ENCODE measurements at regions of chr10 and their contacts with region 1.

Region 1: DNA sequence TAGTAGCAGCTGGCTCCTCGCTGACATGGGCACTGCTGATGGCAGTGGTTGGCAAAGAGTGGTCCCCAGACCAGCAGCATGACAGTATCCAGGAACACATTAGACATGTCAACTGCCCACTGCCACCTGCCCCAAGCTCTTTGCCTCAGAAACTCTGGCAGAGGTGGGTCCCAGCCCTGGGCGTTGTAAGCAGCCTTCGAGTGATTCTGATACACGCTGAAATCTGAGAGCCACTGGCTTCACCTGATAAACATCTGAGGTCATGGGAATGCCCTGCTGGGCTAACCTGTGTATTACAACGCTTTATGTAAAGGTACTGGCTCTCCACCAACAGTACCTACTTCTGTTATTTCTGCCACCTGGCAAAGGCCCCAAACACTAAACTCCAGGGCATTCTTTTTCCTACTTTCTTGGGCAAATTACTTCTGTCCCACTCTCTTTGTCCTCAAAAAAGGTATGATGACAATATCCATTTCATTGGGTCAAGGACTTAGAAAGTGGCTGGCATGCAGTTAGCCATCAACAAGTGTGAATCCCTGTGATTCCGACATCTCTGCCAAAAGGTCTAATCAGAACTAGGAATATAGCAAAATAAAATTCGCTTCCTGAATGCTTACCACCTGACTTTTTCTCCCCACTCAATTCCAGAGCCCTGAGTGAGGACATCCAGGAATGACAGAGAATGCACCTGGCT is 9.2 kb downstream of the SGMS1 start:
- DNase-seq: peak in 1 of 2 donors; percentile 51
- ATAC-seq: peak; percentile 83 to 93 (median 86)
- H3K4me3 ChIP-seq: no peak overlapping the region
- H3K27ac ChIP-seq: peak overlapping the region; percentile 62
- H3K4me1 ChIP-seq: peaks cover 45% of the 10 kb centered on the region
- H3K27me3 ChIP-seq: no peaks in the 10 kb centered on the region
- CTCF ChIP-seq: peak; percentile 61

Region 2: DNA sequence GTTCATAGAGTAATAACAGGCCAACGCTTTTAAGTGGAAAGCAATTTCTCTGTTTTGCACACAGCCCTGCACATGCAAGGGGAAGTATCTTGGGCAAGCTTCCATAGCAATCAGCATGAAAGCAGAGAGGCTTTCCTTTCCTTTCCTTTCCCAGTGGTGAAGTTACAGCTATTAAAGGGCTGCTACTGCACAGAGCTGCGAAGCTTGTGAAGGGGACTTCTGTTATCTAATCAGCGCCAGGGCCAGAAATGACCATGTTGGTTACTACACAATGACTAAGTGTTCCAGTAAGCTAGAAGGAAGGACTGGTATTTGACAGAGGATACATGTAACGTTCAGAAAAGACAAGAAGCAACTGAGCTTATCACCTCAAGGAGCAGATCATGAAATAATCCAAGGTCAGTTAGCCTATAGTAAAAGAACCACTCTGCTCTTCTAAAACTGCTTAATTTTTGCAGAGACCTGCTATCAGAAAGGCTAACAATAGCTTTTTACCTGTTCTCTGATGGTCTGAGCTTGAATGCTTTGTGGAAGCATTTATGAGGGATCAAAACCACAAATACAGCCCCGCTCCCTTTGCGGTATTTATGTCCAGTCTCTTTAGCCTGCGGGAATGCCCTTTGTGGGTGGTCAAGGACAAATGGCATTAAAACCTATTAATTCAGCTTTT is 36.8 kb before region 1 on chr10:
- intact Hi-C with region 1: loop called in 1 of 2 experiments (anchors 5 kb)
- DNase-seq: no peak
- ATAC-seq: peak; percentile 73 to 93 (median 84)
- H3K4me3 ChIP-seq: peak overlapping the region; percentile 5
- H3K27ac ChIP-seq: peak overlapping the region; percentile 26
- H3K4me1 ChIP-seq: peaks cover 57% of the 10 kb centered on the region
- H3K27me3 ChIP-seq: no peaks in the 10 kb centered on the region
- CTCF ChIP-seq: no peak

Region 3: DNA sequence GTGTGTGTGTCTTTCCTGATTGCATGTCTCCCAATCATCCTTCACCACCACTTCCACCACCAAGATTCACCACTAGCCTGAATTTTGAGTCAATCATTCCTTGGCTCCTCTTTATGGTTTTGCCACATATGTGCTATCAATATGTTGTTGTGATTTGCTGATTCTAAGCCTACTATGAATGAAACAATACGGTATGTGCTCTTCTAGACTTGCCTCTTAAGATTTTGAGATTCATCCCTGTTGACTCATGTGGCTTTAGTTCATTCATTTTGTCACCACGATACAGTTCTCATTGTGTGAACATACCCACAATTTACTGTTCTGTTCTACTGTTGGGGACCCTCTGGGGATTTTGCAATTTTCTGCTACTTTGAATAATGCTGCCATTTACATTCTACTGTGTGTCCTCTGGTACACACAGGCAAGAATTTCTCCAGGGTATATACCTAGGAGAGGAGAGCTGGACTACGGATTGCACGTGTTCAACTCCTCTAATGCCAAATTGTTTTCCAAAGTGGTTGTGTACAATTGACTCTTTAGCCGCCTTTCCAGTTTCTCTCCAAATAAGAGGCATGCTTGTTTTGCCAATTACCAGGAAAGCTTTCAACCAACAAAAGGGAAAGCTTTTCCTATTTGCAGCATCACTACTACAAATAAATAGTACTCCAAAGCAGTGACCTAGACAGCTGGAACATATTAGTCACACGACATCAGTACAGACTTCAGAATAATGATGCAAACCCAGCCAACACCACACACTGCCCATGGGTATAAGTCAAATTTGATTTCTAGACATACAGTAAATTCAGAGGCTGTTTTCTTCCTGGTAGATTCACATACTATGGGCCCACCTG is 20.8 kb before region 1 on chr10:
- intact Hi-C with region 1: no loop called
- DNase-seq: no peak
- ATAC-seq: peak; percentile 63 to 85 (median 76)
- H3K4me3 ChIP-seq: no peak overlapping the region
- H3K27ac ChIP-seq: no peak overlapping the region
- H3K4me1 ChIP-seq: peaks cover 18% of the 10 kb centered on the region
- H3K27me3 ChIP-seq: no peaks in the 10 kb centered on the region
- CTCF ChIP-seq: no peak

Measured in psoas muscle (tissue), 8 donors.